Dorsolateral prefrontal cortex (tissue), 120 donors: ENCODE measurements at regions of chrX and their contacts with region 1.

Region 1: DNA sequence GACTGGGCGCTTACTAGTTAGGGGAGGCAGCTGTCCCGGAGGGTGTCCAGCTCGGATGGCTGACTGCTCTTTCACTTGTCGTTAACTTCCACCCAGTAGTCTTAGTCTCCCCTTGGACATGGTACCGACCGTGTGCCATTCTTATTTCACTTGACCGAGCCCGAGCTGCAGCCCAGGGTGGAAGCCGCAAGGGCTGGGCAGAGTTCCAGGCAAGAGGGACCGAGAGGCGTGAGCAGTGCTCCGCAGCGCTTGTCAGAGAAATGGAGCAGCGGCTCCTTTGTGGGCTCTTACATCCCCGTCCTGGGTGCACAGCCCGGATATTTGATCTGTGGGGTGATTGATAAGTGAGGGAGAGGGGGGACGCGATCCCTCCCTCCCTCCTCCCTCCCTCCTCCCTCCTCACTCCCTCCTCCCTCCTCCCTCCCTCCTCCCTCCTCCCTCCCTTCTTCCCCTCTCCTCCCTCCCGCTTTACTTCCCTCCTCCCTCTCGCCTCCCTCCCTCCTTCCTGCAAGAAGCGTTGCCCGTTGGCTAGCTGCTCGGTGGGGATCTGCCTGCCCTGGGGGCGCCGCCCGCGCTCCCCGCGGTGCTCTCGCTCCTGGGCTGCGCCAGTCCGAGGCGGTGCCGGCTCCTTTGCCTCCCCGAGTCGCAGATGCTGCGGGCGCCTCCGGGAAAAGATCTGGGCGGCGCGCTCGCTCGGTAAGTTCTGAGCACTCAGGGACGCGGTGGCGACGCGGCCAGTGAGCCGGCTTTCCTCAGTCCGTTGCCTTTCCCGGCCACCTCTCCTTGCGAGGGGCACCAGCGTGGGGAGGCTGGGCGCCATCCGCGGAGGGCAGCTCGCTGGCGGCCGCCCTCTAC is at the start of gene SLITRK2:
- DNase-seq: peak in 6 of 10 donors; percentile 51 to 70 (median 58)
- H3K4me3 ChIP-seq: peak within 1 kb of the TSS; percentile 29 to 79 (median 64)
- H3K27ac ChIP-seq: peak within 1 kb of the TSS in 58 of 59 donors; percentile 9 to 91 (median 84)
- H3K27me3 ChIP-seq: peaks cover 0 to 66% (median 16%) of the 10 kb centered on the region in 45 donors
- CTCF ChIP-seq: no peak
- total RNA-seq, gene SLITRK2: 16.2 to 37.4 (median 25.2) TPM

Region 2: DNA sequence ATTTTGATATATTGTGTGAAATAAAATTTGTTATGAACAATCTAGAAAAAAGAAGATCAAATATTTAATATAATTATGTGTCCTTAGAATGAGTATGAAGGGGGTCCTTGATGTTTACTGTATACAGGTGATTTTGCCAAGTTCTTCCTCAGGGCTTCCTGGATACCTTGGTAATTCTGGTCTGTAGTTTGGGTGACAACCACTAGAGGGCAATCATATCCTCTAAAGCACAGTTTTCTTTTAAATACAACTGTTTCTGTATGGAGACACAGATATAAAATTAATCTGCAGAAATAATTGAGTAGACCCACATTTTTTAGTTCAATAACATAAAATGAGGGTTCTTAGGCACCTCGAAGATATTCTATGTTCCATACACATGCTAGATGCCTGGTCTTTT is 412.5 kb before region 1 on chrX:
- intact Hi-C with region 1: loop called in 1 of 2 experiments (anchors 10 kb)
- DNase-seq: no peak
- H3K4me3 ChIP-seq: no peak overlapping the region
- H3K27ac ChIP-seq: no peak overlapping the region
- H3K27me3 ChIP-seq: peaks cover 0 to 30% (median 4%) of the 10 kb centered on the region in 45 donors
- CTCF ChIP-seq: peak; percentile 32 to 85 (median 70)

Region 3: DNA sequence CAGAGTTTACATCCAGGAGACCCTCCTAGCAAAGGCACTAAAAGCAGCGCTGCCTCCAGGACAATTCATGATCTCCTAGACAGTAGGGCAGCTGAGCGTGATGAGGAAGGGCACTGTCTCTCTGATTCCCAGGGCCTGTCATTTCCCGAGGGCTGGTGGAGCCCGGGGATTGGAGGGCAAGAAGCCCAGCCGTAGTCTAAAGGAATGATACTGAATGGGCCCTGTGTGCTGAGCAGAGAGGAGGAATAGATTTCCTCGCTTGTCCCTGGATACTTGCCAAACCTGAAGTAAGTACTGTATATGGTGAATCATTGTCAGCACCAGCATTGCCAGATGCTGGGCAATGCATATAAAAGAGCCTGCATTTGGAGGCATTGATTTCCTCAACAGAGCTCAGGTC is 87.9 kb before region 1 on chrX:
- intact Hi-C with region 1: loop called (anchors 5 kb)
- DNase-seq: peak; percentile 3 to 70 (median 56)
- H3K4me3 ChIP-seq: no peak overlapping the region
- H3K27ac ChIP-seq: peak overlapping the region in 45 of 59 donors; percentile 8 to 80 (median 57)
- H3K27me3 ChIP-seq: peaks cover 0 to 41% (median 0%) of the 10 kb centered on the region in 45 donors
- CTCF ChIP-seq: no peak